ENCODE measurements at regions of chr4 and their contacts with region 1.

Region 1: DNA sequence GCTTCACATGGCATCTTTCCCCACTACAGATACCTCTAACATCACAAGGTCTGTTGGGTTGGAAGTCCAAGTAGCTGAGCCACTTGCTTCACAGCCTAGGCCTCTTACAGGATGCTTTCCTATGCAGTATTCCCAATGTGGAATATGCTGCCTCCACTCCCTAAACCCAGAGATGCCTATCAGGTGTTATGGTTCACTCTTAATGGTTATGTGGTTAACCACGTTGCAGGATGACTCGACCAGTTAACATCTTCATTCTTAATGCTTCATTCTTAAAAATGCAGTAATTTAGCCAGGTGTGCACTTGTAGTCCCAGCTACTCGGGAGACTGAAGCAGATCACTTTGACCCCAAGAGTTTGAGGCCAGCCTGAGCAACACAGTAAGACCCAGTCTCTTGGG is 24.2 kb downstream of the HAUS3 start:
- DNase-seq: no peak

Region 2: DNA sequence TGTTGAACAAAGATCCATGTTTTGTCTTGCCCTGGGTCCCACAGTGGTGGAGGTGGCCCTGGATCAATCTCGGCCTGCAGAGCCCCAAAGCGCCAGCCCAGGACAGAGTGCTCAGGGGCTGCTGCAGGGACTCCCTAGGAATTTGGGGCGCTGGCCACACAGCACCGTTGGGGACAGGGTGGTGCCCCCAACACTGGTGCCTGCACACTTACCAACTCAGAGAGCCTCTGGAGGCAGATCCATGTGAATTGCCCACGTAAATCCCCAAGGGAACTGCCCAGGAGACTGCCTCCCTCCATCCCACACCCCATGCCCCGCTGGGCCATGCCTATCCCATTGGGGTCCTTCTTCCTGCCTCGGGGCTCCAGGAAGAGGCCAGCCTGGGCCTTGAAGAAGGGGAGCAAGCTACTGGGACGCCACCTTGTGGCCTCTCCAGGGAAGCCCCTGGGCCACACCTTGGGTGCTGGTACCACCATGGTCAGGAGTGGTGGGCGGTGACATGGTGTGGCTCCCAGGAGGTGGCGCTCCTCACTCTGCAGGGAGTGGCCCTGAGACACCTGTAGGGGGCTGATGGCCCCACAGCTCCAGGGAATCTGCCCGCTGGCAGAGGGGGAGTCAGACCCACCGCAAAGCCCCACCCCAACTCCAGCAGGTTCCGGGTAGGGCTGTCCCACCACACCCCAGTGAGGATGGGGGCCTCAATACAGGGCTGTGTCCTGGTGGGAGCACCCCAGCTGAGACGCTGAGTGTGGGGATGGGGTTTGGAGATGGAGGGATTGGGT is 223.9 kb after region 1 on chr4:
- intact Hi-C with region 1: loop called in 1 of 2 experiments (anchors 10 kb)
- DNase-seq: no peak

Region 3: GRCh38 chr4:2565533-2565932 is 347.8 kb after region 1 on chr4:
- intact Hi-C with region 1: no loop called
- DNase-seq: no peak

Measured in posterior vena cava (tissue), 2 donors.